Activated CD4-positive, alpha-beta T cell treated with anti-CD3 and anti-CD28 coated beads for 36 hours (primary cell): ENCODE measurements at regions of chr18 and their contacts with region 1.

Region 1: GRCh38 chr18:48538531-48539405 is at the start of gene CTIF:
- DNase-seq: peak; percentile 86
- ATAC-seq: peak; percentile 86
- H3K4me3 Mint-ChIP-seq: peak within 1 kb of the TSS; percentile 78
- H3K27ac Mint-ChIP-seq: no peak within 1 kb of the TSS
- H3K4me1 Mint-ChIP-seq: peaks cover 15% of the 10 kb centered on the region
- H3K27me3 Mint-ChIP-seq: peaks cover 8% of the 10 kb centered on the region
- total RNA-seq, gene CTIF: 4.5 to 5.3 TPM

Region 2: GRCh38 chr18:48161191-48161910 is 377.4 kb before region 1 on chr18:
- CTCF ChIA-PET with region 1: no interaction called
- POLR2A ChIA-PET with region 1: no interaction called
- intact Hi-C with region 1: loop called in 1 of 2 experiments (anchors 2 kb)
- DNase-seq: peak; percentile 83
- ATAC-seq: peak; percentile 97
- H3K4me3 Mint-ChIP-seq: peak overlapping the region; percentile 48
- H3K27ac Mint-ChIP-seq: no peak overlapping the region
- H3K4me1 Mint-ChIP-seq: no peaks in the 10 kb centered on the region
- H3K27me3 Mint-ChIP-seq: peaks cover 5% of the 10 kb centered on the region

Region 3: DNA sequence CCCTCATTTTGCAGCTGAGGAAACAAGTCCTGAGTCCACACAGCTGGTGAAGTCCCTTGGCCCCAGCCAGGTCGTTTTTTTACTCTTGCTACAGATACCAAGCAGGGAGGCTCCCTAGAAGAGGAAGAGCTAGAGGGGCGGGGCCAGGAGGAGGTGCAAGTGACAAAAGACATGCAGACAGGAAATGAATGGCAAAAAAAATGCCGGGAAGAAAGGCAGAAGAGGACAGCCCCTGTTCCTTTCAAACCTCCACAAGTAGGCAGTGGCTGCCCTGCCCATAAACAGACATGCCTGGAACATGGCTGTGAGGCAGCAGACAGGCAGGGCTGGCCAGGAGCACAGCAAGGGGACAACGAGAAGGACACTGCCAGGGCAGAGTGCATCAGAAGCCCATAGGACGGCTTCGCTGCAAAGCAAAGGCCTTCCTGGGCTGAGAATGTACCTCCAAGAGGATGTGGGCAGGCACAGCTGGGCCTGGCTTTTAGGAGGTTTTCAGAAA is 238.3 kb before region 1 on chr18:
- CTCF ChIA-PET with region 1: no interaction called
- POLR2A ChIA-PET with region 1: no interaction called
- intact Hi-C with region 1: no loop called
- DNase-seq: peak; percentile 55
- ATAC-seq: peak; percentile 80
- H3K4me3 Mint-ChIP-seq: no peak overlapping the region
- H3K27ac Mint-ChIP-seq: peak overlapping the region; percentile 70
- H3K4me1 Mint-ChIP-seq: peaks cover 9% of the 10 kb centered on the region
- H3K27me3 Mint-ChIP-seq: no peaks in the 10 kb centered on the region